ENCODE measurements at regions of chr13 and their contacts with region 1.

Region 1: GRCh38 chr13:46369506-46370277 is 17.4 kb downstream of the RUBCNL start:
- DNase-seq: no peak
- ATAC-seq: peak; percentile 64
- H3K4me3 Mint-ChIP-seq: peak overlapping the region; percentile 79
- H3K27ac Mint-ChIP-seq: peak overlapping the region; percentile 90
- H3K4me1 Mint-ChIP-seq: peaks cover 77% of the 10 kb centered on the region
- H3K27me3 Mint-ChIP-seq: no peaks in the 10 kb centered on the region
- CTCF ChIP-seq: no peak

Region 2: GRCh38 chr13:46303742-46304385 is 65.8 kb before region 1 on chr13:
- CTCF ChIA-PET with region 1: no interaction called
- POLR2A ChIA-PET with region 1: no interaction called
- intact Hi-C with region 1: no loop called
- DNase-seq: no peak
- ATAC-seq: no peak
- H3K4me3 Mint-ChIP-seq: no peak overlapping the region
- H3K27ac Mint-ChIP-seq: no peak overlapping the region
- H3K4me1 Mint-ChIP-seq: peaks cover 5% of the 10 kb centered on the region
- H3K27me3 Mint-ChIP-seq: peaks cover 3% of the 10 kb centered on the region
- CTCF ChIP-seq: no peak

Region 3: DNA sequence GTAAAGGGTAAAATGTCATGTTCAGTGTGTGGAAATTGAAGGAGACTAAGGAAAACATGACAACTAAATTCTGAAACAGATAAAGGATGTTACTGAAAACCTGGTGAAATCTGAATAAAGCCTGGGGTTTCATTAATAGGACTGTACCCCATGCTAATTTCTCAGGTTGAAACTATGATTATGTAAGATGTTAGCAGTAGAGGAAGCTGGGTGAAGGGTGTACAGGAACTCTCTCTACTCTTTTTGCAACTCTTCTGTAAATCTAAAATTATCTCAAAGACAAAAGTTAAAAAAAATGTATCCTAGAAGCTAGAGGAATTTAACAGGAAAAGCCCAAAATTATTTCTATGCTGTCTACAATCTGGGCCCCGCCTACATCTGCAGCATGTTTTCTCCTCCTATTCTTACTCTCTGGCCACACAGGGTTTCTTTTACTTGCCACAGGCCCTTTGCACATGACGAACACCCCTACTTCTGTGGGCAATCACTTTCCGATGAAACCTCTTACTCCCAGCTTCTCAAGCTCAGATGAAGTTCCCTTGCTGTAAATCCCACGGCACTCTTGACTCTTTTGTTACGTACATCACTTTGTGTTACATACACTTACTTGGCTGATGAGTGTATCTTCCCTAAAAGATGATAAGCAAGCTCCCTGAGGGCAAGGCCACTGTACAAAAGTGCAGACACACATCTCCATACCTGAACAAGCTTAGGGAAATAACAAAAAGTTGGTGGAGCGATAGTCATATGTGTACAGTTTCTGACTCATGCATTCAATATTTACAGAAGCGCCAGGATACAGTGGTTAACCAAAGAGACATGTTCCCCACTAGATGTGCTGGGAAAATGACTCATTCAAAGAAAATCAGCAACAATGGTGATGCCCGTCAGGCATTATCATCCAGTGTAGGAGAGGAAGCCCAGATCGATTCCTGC is 15.3 kb before region 1 on chr13:
- CTCF ChIA-PET with region 1: interaction called, 4 read pairs
- POLR2A ChIA-PET with region 1: interaction called, 7 read pairs
- intact Hi-C with region 1: loop called (anchors 2 kb)
- DNase-seq: no peak
- ATAC-seq: peak; percentile 79
- H3K4me3 Mint-ChIP-seq: no peak overlapping the region
- H3K27ac Mint-ChIP-seq: peak overlapping the region; percentile 83
- H3K4me1 Mint-ChIP-seq: peaks cover 12% of the 10 kb centered on the region
- H3K27me3 Mint-ChIP-seq: no peaks in the 10 kb centered on the region
- CTCF ChIP-seq: no peak

Region 4: GRCh38 chr13:46382224-46382623 is 12.5 kb after region 1 on chr13:
- CTCF ChIA-PET with region 1: interaction called, 70 read pairs
- POLR2A ChIA-PET with region 1: interaction called, 95 read pairs
- intact Hi-C with region 1: loop called (anchors 1 kb)
- DNase-seq: no peak
- ATAC-seq: peak; percentile 42
- H3K4me3 Mint-ChIP-seq: peak overlapping the region; percentile 72
- H3K27ac Mint-ChIP-seq: peak overlapping the region; percentile 93
- H3K4me1 Mint-ChIP-seq: peaks cover 75% of the 10 kb centered on the region
- H3K27me3 Mint-ChIP-seq: no peaks in the 10 kb centered on the region
- CTCF ChIP-seq: no peak

Region 5: GRCh38 chr13:46403851-46404732 is 34.4 kb after region 1 on chr13:
- CTCF ChIA-PET with region 1: interaction called, 6 read pairs
- POLR2A ChIA-PET with region 1: interaction called, 4 read pairs
- intact Hi-C with region 1: loop called (anchors 5 kb)
- DNase-seq: no peak
- ATAC-seq: no peak
- H3K4me3 Mint-ChIP-seq: no peak overlapping the region
- H3K27ac Mint-ChIP-seq: peak overlapping the region; percentile 60
- H3K4me1 Mint-ChIP-seq: peaks cover 61% of the 10 kb centered on the region
- H3K27me3 Mint-ChIP-seq: no peaks in the 10 kb centered on the region
- CTCF ChIP-seq: no peak

Region 6: DNA sequence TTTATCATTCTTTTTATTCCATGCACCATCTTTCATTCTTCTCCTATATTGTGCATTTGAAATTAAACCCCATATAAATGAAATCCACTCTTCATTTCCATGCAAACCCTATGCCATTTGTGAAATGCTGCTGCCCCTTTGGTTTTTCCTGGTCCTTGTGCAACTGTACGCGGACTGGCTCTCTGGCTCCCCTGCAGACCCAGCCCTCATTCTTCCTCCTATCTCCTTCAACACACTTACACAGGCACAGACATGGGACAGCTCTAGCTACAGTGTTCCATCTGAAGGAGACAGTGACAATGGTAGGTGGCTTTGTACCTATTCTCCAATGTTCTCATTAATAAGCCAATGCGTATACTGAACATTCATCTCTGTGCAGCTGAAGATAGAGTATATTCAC is 345.7 kb after region 1 on chr13:
- CTCF ChIA-PET with region 1: no interaction called
- POLR2A ChIA-PET with region 1: no interaction called
- intact Hi-C with region 1: no loop called
- DNase-seq: no peak
- ATAC-seq: no peak
- H3K4me3 Mint-ChIP-seq: no peak overlapping the region
- H3K27ac Mint-ChIP-seq: no peak overlapping the region
- H3K4me1 Mint-ChIP-seq: peaks cover 8% of the 10 kb centered on the region
- H3K27me3 Mint-ChIP-seq: no peaks in the 10 kb centered on the region
- CTCF ChIP-seq: no peak